ENCODE measurements at regions of chr11 and their contacts with region 1.

Region 1: DNA sequence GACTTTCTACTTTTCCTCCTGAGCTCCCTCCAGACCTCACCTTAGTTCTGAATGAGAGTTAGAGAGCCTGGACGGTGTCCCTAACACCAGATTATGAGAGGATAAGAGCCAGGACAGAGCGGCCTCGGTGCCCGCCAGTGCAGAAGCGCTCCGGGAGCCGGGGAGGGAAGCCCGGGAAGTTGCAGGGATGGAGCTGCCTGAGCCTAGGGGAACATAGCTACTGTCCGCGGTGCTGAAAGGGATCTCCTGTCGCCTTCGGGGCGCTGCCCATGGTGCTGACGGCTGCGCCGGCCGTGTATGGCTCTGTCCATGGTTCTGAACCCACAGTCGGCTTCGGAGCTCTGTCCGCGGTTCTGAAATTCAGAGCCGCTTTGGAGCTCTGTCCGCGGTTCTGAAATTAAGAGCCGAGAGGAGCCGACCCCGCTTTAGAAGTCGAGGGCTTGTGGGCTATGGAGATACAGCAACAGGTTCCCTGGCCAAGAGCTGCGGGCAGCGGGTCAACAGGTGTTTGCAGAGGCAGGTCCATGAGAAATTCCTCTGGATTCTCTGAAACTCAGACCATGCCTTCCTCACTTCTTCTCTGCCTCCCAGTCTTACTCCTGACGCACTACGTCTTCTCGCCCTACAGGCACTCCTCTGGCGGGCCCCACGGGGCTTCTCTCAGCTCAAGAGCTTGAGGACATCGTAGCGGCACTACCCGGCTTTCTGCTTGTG is 814 bp downstream of the NPAS4 start:
- DNase-seq: peak; percentile 88
- H3K4me3 ChIP-seq: no peak overlapping the region
- H3K27ac ChIP-seq: no peak overlapping the region
- H3K4me1 ChIP-seq: no peaks in the 10 kb centered on the region
- H3K27me3 ChIP-seq: peaks cover 13 to 17% of the 10 kb centered on the region in 2 experiments
- CTCF ChIP-seq: no peak
- POLR2A ChIP-seq: no peak

Region 2: DNA sequence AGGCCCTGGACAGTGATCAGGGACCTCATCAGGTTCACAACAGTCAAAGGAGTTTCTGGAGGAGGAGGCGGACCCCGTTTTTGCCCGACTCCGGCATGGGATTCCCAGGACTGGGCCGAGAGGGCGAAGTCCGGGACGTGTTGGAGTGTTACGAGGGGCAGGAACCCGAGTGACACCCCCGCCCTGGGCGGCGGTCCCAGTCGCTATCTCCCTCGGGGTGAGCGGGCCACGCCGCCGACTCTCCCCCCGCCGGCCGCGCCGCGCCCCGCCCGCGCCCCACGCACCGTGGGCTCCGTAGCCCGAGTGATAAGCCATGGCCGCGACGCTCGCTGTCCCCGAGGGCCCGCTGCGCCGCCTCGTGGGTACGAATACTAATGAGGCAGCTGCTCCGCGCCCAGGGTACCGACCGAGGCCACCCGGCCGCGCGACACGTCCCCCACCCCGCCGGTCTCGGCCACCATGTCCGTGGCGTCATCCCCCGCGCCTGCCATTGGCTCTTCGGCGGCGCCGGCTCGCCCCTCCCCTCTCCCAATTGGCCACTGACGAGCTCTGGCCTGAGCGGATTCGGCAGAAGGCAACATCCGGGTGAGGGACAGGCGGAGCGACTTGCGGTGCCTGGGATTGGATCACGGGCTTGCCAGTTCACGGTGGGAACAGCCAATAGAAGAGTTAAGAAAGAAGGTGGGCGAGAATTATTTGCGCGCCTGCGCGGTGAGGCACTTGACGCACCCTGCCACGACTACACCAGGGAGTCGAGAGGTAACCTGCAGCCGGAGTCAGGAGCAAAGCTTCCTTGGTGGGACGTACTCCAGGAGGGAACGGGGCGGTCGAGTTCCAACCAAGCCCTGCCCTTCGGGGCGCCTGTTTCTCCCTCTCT is 132.7 kb before region 1 on chr11 and contains the start of gene YIF1A:
- CTCF ChIA-PET with region 1: no interaction called
- POLR2A ChIA-PET with region 1: no interaction called
- dilution Hi-C with region 1: no loop called
- intact Hi-C with region 1: loop called (anchors 1 kb)
- DNase-seq: peak; percentile 100
- H3K4me3 ChIP-seq: peak within 1 kb of the TSS; percentile 73 to 94 (median 93)
- H3K27ac ChIP-seq: peak within 1 kb of the TSS; percentile 78
- H3K4me1 ChIP-seq: peaks cover 13% of the 10 kb centered on the region
- H3K27me3 ChIP-seq: peaks cover 19 to 20% of the 10 kb centered on the region in 2 experiments
- CTCF ChIP-seq: no peak
- POLR2A ChIP-seq: peak; percentile 88
- total RNA-seq, gene YIF1A: 104 and 123 TPM in 2 replicates

Region 3: DNA sequence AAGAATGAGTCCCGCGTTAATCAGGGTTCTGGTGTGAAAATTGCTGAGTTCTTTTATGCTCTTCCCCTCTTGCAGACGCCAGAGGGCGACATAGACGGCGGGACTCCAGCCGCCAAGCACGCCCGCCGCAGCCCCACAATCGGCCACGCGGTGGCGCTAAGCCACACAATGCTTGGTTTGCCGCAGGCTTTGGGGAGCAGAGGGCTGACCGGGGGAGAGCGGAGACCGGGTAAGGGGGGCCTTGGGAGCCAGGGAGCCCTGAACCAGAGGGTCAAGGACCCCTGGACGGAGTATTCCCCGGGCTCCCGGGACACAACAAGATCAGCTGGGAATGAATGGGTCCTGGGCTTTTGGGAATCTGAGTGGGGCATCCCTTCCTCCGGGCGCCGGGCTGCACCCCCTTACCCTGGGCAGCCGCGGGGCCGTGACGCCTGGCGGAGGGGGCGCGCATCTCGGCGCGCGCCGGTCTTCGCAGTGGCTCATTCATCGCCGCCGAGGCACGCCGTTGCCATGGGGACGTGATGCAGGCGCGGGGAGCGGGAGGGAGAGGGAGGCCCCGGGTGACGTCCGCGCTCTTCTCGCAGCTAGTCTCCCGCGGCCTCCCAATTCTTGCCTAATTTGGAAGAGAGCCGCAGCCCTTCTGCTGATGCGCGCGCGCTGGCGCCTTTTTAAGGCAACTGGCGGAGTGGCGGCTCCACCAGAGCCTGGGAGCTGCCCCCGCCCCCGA is 13.0 kb before region 1 on chr11:
- CTCF ChIA-PET with region 1: interaction called, 25 read pairs
- POLR2A ChIA-PET with region 1: no interaction called
- dilution Hi-C with region 1: no loop called
- intact Hi-C with region 1: loop called (anchors 1 kb)
- DNase-seq: peak; percentile 82
- H3K4me3 ChIP-seq: no peak overlapping the region
- H3K27ac ChIP-seq: no peak overlapping the region
- H3K4me1 ChIP-seq: no peaks in the 10 kb centered on the region
- H3K27me3 ChIP-seq: peaks cover 8 to 10% of the 10 kb centered on the region in 2 experiments
- CTCF ChIP-seq: peak; percentile 100
- POLR2A ChIP-seq: no peak

Region 4: DNA sequence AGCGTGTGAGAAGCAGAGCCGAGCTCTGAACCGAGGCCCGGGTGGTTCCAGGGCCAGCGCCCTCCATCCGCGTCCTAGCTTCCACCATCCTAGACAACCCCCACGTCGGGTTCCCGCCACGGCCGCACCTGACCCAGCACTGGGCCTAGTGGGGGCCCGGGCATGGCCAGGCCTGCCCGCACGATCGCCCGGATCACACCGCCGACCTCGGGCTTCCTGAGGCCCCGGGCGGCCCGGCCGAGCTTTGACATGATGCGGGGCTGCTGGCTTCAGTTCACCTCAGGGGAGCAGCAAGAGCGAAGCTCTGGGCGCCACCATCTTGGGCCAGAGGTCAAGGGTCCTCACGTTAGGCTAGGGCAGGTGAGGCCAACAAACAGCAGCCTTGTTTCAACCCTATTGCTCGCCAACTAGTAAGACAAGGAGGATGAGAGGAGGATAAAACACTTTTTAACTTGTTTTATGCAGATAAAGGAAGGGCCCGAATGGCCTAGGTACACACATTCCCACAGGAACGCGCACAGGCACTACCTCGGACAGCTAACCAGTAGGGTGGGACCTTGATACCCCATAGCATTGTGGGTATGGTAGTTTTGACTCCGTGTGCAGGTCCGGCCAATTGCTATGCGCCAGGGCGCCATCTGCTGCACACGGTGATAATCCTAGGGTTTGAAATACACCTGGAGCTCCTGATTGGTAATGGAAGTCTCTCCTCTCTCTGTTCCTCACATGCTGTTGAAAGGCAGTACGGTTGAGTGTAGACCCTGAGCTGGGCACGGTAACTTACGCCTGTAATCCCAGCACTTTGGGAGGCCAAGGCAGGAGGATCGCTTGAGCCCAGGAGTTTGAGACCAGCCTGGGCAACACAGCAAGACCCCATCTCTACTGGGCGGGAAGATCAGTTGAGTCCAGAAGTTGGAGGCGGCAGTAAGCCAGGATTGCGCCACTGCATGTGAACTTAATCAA is 17.1 kb after region 1 on chr11 and contains the start of gene MRPL11:
- CTCF ChIA-PET with region 1: interaction called, 15 read pairs
- POLR2A ChIA-PET with region 1: no interaction called
- dilution Hi-C with region 1: no loop called
- intact Hi-C with region 1: no loop called
- DNase-seq: peak; percentile 95
- H3K4me3 ChIP-seq: peak within 1 kb of the TSS; percentile 59 to 80 (median 64)
- H3K27ac ChIP-seq: peak within 1 kb of the TSS; percentile 77
- H3K4me1 ChIP-seq: peaks cover 6% of the 10 kb centered on the region
- H3K27me3 ChIP-seq: no peaks in the 10 kb centered on the region
- CTCF ChIP-seq: peak; percentile 70 to 77
- POLR2A ChIP-seq: no peak
- total RNA-seq, gene MRPL11: 69.1 and 72.1 TPM in 2 replicates

Region 5: GRCh38 chr11:66466225-66467027 is 44.8 kb after region 1 on chr11 and contains the start of gene PELI3:
- CTCF ChIA-PET with region 1: no interaction called
- POLR2A ChIA-PET with region 1: no interaction called
- dilution Hi-C with region 1: no loop called
- intact Hi-C with region 1: loop called (anchors 2 kb)
- DNase-seq: peak; percentile 90
- H3K4me3 ChIP-seq: peak within 1 kb of the TSS; percentile 63 to 83 (median 65)
- H3K27ac ChIP-seq: no peak within 1 kb of the TSS
- H3K4me1 ChIP-seq: peaks cover 10% of the 10 kb centered on the region
- H3K27me3 ChIP-seq: peaks cover 0 to 2% of the 10 kb centered on the region in 2 experiments
- CTCF ChIP-seq: no peak
- POLR2A ChIP-seq: no peak
- total RNA-seq, gene PELI3: 2.9 and 5.5 TPM in 2 replicates

Region 6: GRCh38 chr11:66495401-66495844 is 73.8 kb after region 1 on chr11:
- CTCF ChIA-PET with region 1: no interaction called
- POLR2A ChIA-PET with region 1: no interaction called
- dilution Hi-C with region 1: no loop called
- intact Hi-C with region 1: no loop called
- DNase-seq: no peak
- H3K4me3 ChIP-seq: no peak overlapping the region
- H3K27ac ChIP-seq: no peak overlapping the region
- H3K4me1 ChIP-seq: no peaks in the 10 kb centered on the region
- H3K27me3 ChIP-seq: no peaks in the 10 kb centered on the region
- CTCF ChIP-seq: peak in 1 of 2 donors; percentile 12
- POLR2A ChIP-seq: no peak

Region 7: GRCh38 chr11:66631883-66632282 is 210.2 kb after region 1 on chr11:
- CTCF ChIA-PET with region 1: no interaction called
- POLR2A ChIA-PET with region 1: no interaction called
- dilution Hi-C with region 1: no loop called
- intact Hi-C with region 1: no loop called
- DNase-seq: no peak
- H3K4me3 ChIP-seq: no peak overlapping the region
- H3K27ac ChIP-seq: no peak overlapping the region
- H3K4me1 ChIP-seq: no peaks in the 10 kb centered on the region
- H3K27me3 ChIP-seq: no peaks in the 10 kb centered on the region
- CTCF ChIP-seq: no peak
- POLR2A ChIP-seq: no peak